K562 (cell line): ENCODE measurements at regions of chr3 and their contacts with region 1.

Region 1: DNA sequence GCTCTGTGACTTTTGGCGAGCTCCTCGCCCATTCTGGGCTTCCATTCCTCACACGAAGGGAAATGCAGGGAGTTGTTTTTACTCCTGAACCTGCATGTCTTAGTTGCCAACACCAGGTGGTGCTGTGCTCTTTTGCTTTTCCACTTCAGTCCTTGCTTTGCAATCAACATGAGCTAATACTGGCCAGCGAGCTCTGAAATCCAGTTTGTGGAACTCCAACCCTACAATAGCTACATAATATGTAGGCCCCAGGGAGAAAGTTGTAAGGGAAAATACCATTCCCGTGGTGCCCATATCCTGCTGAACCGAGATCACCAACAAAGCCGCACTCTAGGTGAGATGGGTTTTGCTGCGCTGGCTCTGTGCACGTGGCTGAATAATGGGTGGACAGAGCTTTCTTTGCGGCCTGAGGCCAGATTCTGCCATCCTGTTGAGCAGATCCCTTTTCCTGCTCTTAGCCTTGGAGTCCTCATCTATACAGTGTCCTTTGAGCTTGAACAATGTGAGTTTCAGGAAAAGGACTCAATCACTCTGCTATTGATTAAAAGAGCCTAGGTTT is 25.0 kb downstream of the LSM3 start:
- DNase-seq: peak; percentile 76 to 93 (median 82)
- ATAC-seq: peak; percentile 85
- H3K4me3 ChIP-seq: no peak overlapping the region
- H3K27ac ChIP-seq: peak overlapping the region; percentile 86
- H3K4me1 ChIP-seq: peaks cover 32 to 48% of the 10 kb centered on the region in 2 experiments; a peak in 4 of 5 replicates
- H3K27me3 ChIP-seq: no peaks in the 10 kb centered on the region
- CTCF ChIP-seq: peak; percentile 89 to 98 (median 97)
- EP300 ChIP-seq: peak; percentile 40; the same call in 1 of the 2 replicates
- POLR2A ChIP-seq: no peak
- RAD21 ChIP-seq: peak; percentile 99

Region 2: DNA sequence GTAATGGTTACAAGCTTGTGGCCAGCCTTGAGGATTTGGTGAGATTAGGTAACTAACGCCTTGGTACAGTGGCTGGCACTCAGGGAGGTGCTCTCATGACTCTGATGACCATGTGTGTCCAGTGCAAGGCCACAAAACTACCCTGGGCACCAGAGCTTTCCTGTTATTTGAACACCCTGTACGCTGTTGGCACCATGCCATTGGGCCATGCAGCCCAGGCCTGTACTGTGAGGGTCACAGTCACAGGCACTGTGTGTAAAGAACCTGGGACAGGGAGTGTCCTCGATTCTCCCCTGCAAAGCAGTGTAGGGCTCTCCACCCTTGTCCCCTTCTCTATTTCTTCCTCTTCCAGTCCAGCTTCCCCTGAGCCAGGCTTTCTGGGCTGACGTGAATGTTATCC is 72.5 kb before region 1 on chr3:
- CTCF ChIA-PET with region 1: no interaction called
- POLR2A ChIA-PET with region 1: no interaction called
- in situ Hi-C with region 1: no loop called
- intact Hi-C with region 1: no loop called
- DNase-seq: no peak
- ATAC-seq: no peak
- H3K4me3 ChIP-seq: no peak overlapping the region
- H3K27ac ChIP-seq: no peak overlapping the region
- H3K4me1 ChIP-seq: peaks cover 9 to 14% of the 10 kb centered on the region in 2 experiments
- H3K27me3 ChIP-seq: no peaks in the 10 kb centered on the region
- CTCF ChIP-seq: no peak
- EP300 ChIP-seq: no peak
- POLR2A ChIP-seq: no peak
- RAD21 ChIP-seq: no peak

Region 3: GRCh38 chr3:14178247-14179113 is 25.1 kb before region 1 on chr3 and contains the starts of genes LSM3 and XPC:
- CTCF ChIA-PET with region 1: no interaction called
- POLR2A ChIA-PET with region 1: interaction called, 28 read pairs
- in situ Hi-C with region 1: no loop called
- intact Hi-C with region 1: no loop called
- DNase-seq: peak; percentile 95 to 99 (median 96)
- ATAC-seq: peak; percentile 96
- H3K4me3 ChIP-seq: peak within 1 kb of the TSS; percentile 65
- H3K27ac ChIP-seq: peak within 1 kb of the TSS; percentile 89
- H3K4me1 ChIP-seq: peaks cover 13 to 41% of the 10 kb centered on the region in 2 experiments
- H3K27me3 ChIP-seq: no peaks in the 10 kb centered on the region
- CTCF ChIP-seq: peak in 2 of 3 experiments; percentile 1 to 19; a peak in 1 of 6 replicates
- EP300 ChIP-seq: no peak
- POLR2A ChIP-seq: peak; percentile 98
- RAD21 ChIP-seq: no peak
- polyA plus RNA-seq, gene LSM3: 180 to 203 TPM
- polyA plus RNA-seq, gene XPC: 3.8 to 4.1 TPM

Region 4: GRCh38 chr3:14261229-14261628 is 57.6 kb after region 1 on chr3:
- CTCF ChIA-PET with region 1: interaction called, 14 read pairs
- POLR2A ChIA-PET with region 1: no interaction called
- in situ Hi-C with region 1: loop called (anchors 5 kb)
- intact Hi-C with region 1: loop called (anchors 1 kb)
- DNase-seq: peak; percentile 92 to 96 (median 94)
- ATAC-seq: peak; percentile 90
- H3K4me3 ChIP-seq: no peak overlapping the region
- H3K27ac ChIP-seq: no peak overlapping the region
- H3K4me1 ChIP-seq: peaks cover 20 to 25% of the 10 kb centered on the region in 2 experiments
- H3K27me3 ChIP-seq: no peaks in the 10 kb centered on the region
- CTCF ChIP-seq: peak; percentile 96 to 99 (median 99)
- EP300 ChIP-seq: peak; percentile 46; the same call in 1 of the 2 replicates
- POLR2A ChIP-seq: no peak
- RAD21 ChIP-seq: peak; percentile 99

Region 5: GRCh38 chr3:14402304-14402811 is 198.8 kb after region 1 on chr3 and contains the start of gene SLC6A6:
- CTCF ChIA-PET with region 1: no interaction called
- POLR2A ChIA-PET with region 1: interaction called, 11 read pairs
- in situ Hi-C with region 1: no loop called
- intact Hi-C with region 1: loop called (anchors 2 kb)
- DNase-seq: peak; percentile 94 to 97 (median 97)
- ATAC-seq: peak; percentile 80
- H3K4me3 ChIP-seq: peak within 1 kb of the TSS; percentile 92
- H3K27ac ChIP-seq: peak within 1 kb of the TSS; percentile 91
- H3K4me1 ChIP-seq: peaks cover 20 to 59% of the 10 kb centered on the region in 2 experiments; a peak in 4 of 5 replicates
- H3K27me3 ChIP-seq: no peaks in the 10 kb centered on the region
- CTCF ChIP-seq: peak; percentile 47 to 75 (median 64); a peak in 5 of 6 replicates
- EP300 ChIP-seq: 0 out of 2 replicates have a peak, but pooled peaks have one; percentile 14
- POLR2A ChIP-seq: peak; percentile 87
- RAD21 ChIP-seq: peak; percentile 52 to 67
- polyA plus RNA-seq, gene SLC6A6: 12.3 to 14.8 TPM

Region 6: DNA sequence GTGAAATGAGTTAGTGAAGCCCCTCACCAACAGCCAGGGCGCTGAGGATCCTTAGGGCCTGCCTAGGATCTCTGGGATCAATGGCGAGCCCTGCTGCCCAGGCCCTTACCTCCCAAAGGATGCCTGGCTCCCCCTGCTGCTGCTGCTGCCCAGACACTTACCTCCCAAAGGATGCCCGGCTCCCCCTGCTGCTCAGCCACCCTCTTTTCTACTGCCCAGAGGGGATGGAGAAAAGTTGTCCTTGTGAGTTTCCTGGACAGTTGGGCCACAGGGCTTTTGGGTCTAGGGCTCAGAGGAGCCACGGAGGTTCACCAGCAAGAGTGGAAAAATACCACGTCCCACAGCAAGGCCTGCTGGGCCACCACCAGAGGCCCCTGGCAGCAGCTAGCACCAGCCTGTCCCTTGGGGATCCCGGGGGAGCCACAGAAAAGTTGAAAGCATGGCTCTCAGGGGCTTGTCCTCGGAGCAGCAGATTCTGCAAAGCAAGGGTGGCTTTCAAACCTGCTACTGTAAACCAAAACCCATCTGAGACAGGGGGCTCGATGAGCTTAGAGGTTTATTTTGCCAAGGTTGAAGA is 258.2 kb after region 1 on chr3:
- CTCF ChIA-PET with region 1: interaction called, 55 read pairs
- POLR2A ChIA-PET with region 1: interaction called, 5 read pairs
- in situ Hi-C with region 1: loop called (anchors 5 kb)
- intact Hi-C with region 1: no loop called
- DNase-seq: peak in 3 of 4 experiments; percentile 41 to 51 (median 42)
- ATAC-seq: peak; percentile 65
- H3K4me3 ChIP-seq: no peak overlapping the region
- H3K27ac ChIP-seq: no peak overlapping the region
- H3K4me1 ChIP-seq: peaks cover 9 to 12% of the 10 kb centered on the region in 2 experiments; a peak in 3 of 5 replicates
- H3K27me3 ChIP-seq: no peaks in the 10 kb centered on the region
- CTCF ChIP-seq: peak; percentile 73 to 98 (median 97)
- EP300 ChIP-seq: no peak
- POLR2A ChIP-seq: no peak
- RAD21 ChIP-seq: peak; percentile 88 to 93

Region 7: GRCh38 chr3:14497321-14497720 is 293.7 kb after region 1 on chr3:
- CTCF ChIA-PET with region 1: no interaction called
- POLR2A ChIA-PET with region 1: interaction called, 3 read pairs
- in situ Hi-C with region 1: no loop called
- intact Hi-C with region 1: loop called (anchors 2 kb)
- DNase-seq: peak in 2 of 4 experiments; percentile 42 to 56
- ATAC-seq: peak; percentile 80
- H3K4me3 ChIP-seq: no peak overlapping the region
- H3K27ac ChIP-seq: no peak overlapping the region
- H3K4me1 ChIP-seq: peaks cover 0 to 12% of the 10 kb centered on the region in 2 experiments; a peak in 2 of 5 replicates
- H3K27me3 ChIP-seq: peaks cover 0 to 14% of the 10 kb centered on the region in 2 experiments; a peak in 2 of 5 replicates
- CTCF ChIP-seq: peak; percentile 35 to 53 (median 48); a peak in 5 of 6 replicates
- EP300 ChIP-seq: no peak
- POLR2A ChIP-seq: no peak
- RAD21 ChIP-seq: peak; percentile 20 to 61; a peak in 2 of 4 replicates

Region 8: DNA sequence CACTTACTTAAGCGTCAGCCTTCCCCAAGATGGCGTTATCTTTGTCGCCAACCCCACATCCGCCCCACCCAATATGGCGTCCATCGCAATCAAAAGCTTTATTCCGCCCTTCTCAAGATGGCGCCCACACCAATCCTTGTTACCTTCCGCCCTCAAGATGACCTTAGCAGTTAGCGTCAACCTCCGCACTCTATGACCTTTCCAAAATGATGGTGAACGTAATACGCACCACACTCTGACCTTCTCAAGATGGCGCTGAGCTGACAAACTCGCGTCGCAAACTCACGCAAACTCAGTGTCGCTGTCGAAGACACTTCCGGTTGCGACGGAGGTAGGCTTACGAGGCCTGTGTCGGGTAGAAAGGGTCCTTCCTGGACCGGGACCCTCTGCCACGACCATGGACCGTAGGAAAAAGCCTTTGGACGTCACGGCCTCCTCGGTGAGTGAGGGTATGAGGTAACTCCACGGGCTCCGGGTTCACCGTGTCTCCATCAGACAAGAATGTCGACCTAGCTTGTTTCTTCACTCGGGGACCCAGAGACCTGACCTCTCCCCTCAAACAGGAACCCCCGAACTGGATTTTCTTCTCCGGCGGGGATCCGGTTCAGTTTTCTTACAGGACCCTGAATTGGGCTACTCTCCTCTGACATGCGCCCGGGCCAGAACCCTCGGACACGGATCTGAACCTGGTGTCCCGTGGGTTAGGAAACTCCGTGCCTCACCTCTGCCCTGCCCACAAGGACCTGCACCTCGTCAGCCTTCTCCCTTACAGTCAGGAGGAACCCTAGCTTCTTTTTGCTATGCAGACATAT is 448.0 kb after region 1 on chr3 and contains the start of gene CCDC174:
- CTCF ChIA-PET with region 1: no interaction called
- POLR2A ChIA-PET with region 1: no interaction called
- in situ Hi-C with region 1: no loop called
- intact Hi-C with region 1: loop called (anchors 10 kb)
- DNase-seq: peak; percentile 93 to 100 (median 94)
- ATAC-seq: peak; percentile 92
- H3K4me3 ChIP-seq: peak within 1 kb of the TSS; percentile 54
- H3K27ac ChIP-seq: peak within 1 kb of the TSS; percentile 91
- H3K4me1 ChIP-seq: peaks cover 14 to 28% of the 10 kb centered on the region in 2 experiments; a peak in 4 of 5 replicates
- H3K27me3 ChIP-seq: no peaks in the 10 kb centered on the region
- CTCF ChIP-seq: peak in 1 of 3 experiments; percentile 48; a peak in 2 of 6 replicates
- EP300 ChIP-seq: peak; percentile 44; the same call in 1 of the 2 replicates
- POLR2A ChIP-seq: peak; percentile 96
- RAD21 ChIP-seq: 0 out of 4 replicates have a peak, but pooled peaks of 1 of the 2 experiments have one; percentile 6
- polyA plus RNA-seq, gene CCDC174: 34.9 to 41.0 TPM